CD4-positive, alpha-beta T cell (primary cell): ENCODE measurements at regions of chr22 and their contacts with region 1.

Region 1: GRCh38 chr22:40177738-40178416 is at the start of gene TNRC6B:
- DNase-seq: peak; percentile 36 to 97 (median 58)
- ATAC-seq: peak; percentile 80
- H3K4me3 ChIP-seq: peak within 1 kb of the TSS; percentile 74
- H3K4me3 Mint-ChIP-seq: peak within 1 kb of the TSS; percentile 90
- H3K27ac ChIP-seq: peak within 1 kb of the TSS; percentile 49 to 84
- H3K27ac Mint-ChIP-seq: peak within 1 kb of the TSS; percentile 90
- H3K4me1 ChIP-seq: peaks cover 47% of the 10 kb centered on the region
- H3K4me1 Mint-ChIP-seq: peaks cover 72% of the 10 kb centered on the region
- H3K27me3 ChIP-seq: no peaks in the 10 kb centered on the region
- H3K27me3 Mint-ChIP-seq: no peaks in the 10 kb centered on the region
- CTCF ChIP-seq: no peak
- total RNA-seq, gene TNRC6B: 110 to 111 TPM

Region 2: GRCh38 chr22:39520054-39520891 is 657.6 kb before region 1 on chr22 and contains the start of gene ATF4:
- CTCF ChIA-PET with region 1: no interaction called
- POLR2A ChIA-PET with region 1: interaction called, 10 read pairs
- intact Hi-C with region 1: no loop called
- DNase-seq: peak; percentile 93 to 99 (median 94)
- ATAC-seq: peak; percentile 91
- H3K4me3 ChIP-seq: peak within 1 kb of the TSS; percentile 100
- H3K4me3 Mint-ChIP-seq: peak within 1 kb of the TSS; percentile 97
- H3K27ac ChIP-seq: peak within 1 kb of the TSS; percentile 92 to 95
- H3K27ac Mint-ChIP-seq: peak within 1 kb of the TSS; percentile 98
- H3K4me1 ChIP-seq: peaks cover 52% of the 10 kb centered on the region
- H3K4me1 Mint-ChIP-seq: peaks cover 57% of the 10 kb centered on the region
- H3K27me3 ChIP-seq: no peaks in the 10 kb centered on the region
- H3K27me3 Mint-ChIP-seq: peaks cover 5% of the 10 kb centered on the region
- CTCF ChIP-seq: no peak
- total RNA-seq, gene ATF4: 358 to 365 TPM

Region 3: GRCh38 chr22:40116496-40117200 is 61.2 kb before region 1 on chr22:
- CTCF ChIA-PET with region 1: no interaction called
- POLR2A ChIA-PET with region 1: interaction called, 5 read pairs
- intact Hi-C with region 1: loop called in 1 of 2 experiments (anchors 10 kb)
- DNase-seq: peak; percentile 17 to 87 (median 54)
- ATAC-seq: peak; percentile 94
- H3K4me3 ChIP-seq: no peak overlapping the region
- H3K4me3 Mint-ChIP-seq: peak overlapping the region; percentile 74
- H3K27ac ChIP-seq: peak overlapping the region; percentile 39 to 56
- H3K27ac Mint-ChIP-seq: peak overlapping the region; percentile 87
- H3K4me1 ChIP-seq: peaks cover 67% of the 10 kb centered on the region
- H3K4me1 Mint-ChIP-seq: peaks cover 95% of the 10 kb centered on the region
- H3K27me3 ChIP-seq: no peaks in the 10 kb centered on the region
- H3K27me3 Mint-ChIP-seq: no peaks in the 10 kb centered on the region
- CTCF ChIP-seq: no peak

Region 4: DNA sequence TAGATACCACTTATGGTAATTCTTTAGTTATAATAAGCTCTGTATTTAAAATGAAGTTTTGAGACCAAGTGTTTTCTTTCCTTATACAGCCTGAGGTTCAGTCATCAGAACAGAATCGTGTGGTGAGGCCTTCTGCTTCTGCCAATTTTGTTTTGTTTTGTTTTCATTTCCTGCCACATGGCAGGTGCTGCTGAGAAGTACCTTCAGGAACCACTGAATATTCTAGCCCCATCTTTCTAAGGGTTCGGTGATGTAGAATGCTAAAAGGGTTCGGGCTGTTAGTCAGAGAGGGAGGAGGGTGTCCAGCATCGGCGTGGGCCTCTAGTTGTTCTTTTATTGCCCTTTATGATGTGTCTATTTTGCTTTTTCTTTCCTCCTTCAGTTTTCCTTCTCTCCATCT is 25.7 kb after region 1 on chr22:
- CTCF ChIA-PET with region 1: no interaction called
- POLR2A ChIA-PET with region 1: interaction called, 8 read pairs
- intact Hi-C with region 1: loop called in 1 of 2 experiments (anchors 2 kb)
- DNase-seq: peak in 8 of 14 experiments; percentile 25 to 71 (median 46)
- ATAC-seq: peak; percentile 96
- H3K4me3 ChIP-seq: no peak overlapping the region
- H3K4me3 Mint-ChIP-seq: peak overlapping the region; percentile 57
- H3K27ac ChIP-seq: peak overlapping the region; percentile 45 to 48
- H3K27ac Mint-ChIP-seq: peak overlapping the region; percentile 91
- H3K4me1 ChIP-seq: peaks cover 29% of the 10 kb centered on the region
- H3K4me1 Mint-ChIP-seq: peaks cover 86% of the 10 kb centered on the region
- H3K27me3 ChIP-seq: no peaks in the 10 kb centered on the region
- H3K27me3 Mint-ChIP-seq: no peaks in the 10 kb centered on the region
- CTCF ChIP-seq: no peak

Region 5: GRCh38 chr22:40224702-40225101 is 46.8 kb after region 1 on chr22:
- CTCF ChIA-PET with region 1: interaction called, 10 read pairs
- POLR2A ChIA-PET with region 1: interaction called, 4 read pairs
- intact Hi-C with region 1: loop called in 1 of 2 experiments (anchors 5 kb)
- DNase-seq: peak in 11 of 14 experiments; percentile 30 to 70 (median 53)
- ATAC-seq: peak; percentile 98
- H3K4me3 ChIP-seq: no peak overlapping the region
- H3K4me3 Mint-ChIP-seq: peak overlapping the region; percentile 69
- H3K27ac ChIP-seq: no peak overlapping the region
- H3K27ac Mint-ChIP-seq: peak overlapping the region; percentile 81
- H3K4me1 ChIP-seq: peaks cover 56% of the 10 kb centered on the region
- H3K4me1 Mint-ChIP-seq: peaks cover 66% of the 10 kb centered on the region
- H3K27me3 ChIP-seq: no peaks in the 10 kb centered on the region
- H3K27me3 Mint-ChIP-seq: no peaks in the 10 kb centered on the region
- CTCF ChIP-seq: no peak

Region 6: DNA sequence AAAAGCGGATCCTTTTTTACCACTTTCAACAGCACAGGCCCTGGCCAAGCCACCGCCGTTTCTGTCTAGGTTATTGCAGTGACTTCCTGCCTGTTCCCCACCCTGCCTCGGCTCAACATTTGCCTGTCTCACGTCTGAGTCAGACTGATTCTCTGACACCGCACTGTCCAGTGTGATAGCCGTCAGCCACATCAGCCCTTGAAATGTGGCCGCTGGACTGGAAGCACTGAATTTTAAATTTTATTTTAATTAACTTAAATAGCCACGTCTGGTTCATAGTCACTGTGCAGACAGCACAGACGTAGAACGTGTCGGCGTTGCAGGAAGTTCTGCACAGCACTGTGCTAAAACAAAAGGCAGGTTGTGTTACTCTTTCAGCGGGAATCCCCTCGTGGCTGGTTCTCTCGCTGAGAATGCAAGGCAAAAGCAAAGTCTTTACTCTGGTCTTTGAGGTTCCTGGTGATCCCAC is 112.1 kb after region 1 on chr22:
- CTCF ChIA-PET with region 1: no interaction called
- POLR2A ChIA-PET with region 1: interaction called, 6 read pairs
- intact Hi-C with region 1: loop called in 1 of 2 experiments (anchors 1 kb)
- DNase-seq: peak; percentile 49 to 90 (median 70)
- ATAC-seq: peak; percentile 85
- H3K4me3 ChIP-seq: peak overlapping the region; percentile 2
- H3K4me3 Mint-ChIP-seq: peak overlapping the region; percentile 70
- H3K27ac ChIP-seq: peak overlapping the region; percentile 83 to 94
- H3K27ac Mint-ChIP-seq: peak overlapping the region; percentile 98
- H3K4me1 ChIP-seq: peaks cover 44% of the 10 kb centered on the region
- H3K4me1 Mint-ChIP-seq: peaks cover 65% of the 10 kb centered on the region
- H3K27me3 ChIP-seq: no peaks in the 10 kb centered on the region
- H3K27me3 Mint-ChIP-seq: no peaks in the 10 kb centered on the region
- CTCF ChIP-seq: no peak